ENCODE measurements at regions of chr18 and their contacts with region 1.

Region 1: DNA sequence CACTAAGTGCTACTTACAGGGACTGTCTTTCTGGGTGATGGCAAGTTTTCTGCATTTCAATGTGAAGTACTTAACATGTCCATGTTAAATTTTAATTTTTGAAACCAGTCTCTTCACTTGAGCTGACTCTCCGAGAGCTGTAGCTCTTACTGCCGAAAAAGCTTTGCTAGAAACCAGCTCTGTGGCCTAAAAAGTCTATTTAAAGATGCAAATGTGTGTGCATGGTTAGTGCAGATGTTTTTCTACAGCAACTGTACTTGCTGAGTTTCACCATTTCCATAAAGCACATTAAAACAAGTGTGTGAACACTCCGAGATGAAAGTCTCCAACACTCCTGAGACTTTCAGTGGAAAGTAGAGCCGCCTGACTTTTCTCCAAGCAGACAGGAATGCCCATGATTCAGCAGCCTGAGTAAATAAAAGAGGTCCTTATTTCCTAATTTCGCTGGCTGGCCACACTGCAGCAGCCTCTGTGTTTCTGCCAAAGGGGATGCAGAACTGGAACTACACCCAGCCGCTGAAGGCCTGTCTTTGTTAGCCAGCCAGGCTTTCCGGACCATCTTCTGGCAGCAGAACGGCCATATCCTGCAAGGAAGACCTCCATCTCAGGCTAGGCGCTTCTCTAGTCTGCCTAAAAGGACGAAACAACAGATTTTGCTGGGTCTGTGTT is 121.2 kb downstream of the ZNF521 start:
- DNase-seq: peak; percentile 17 to 91
- H3K4me3 ChIP-seq: peak overlapping the region in 1 of 2 donors; percentile 43
- H3K27ac ChIP-seq: peak overlapping the region; percentile 68 to 80
- H3K4me1 ChIP-seq: peaks cover 0 to 21% of the 10 kb centered on the region in 2 donors
- H3K27me3 ChIP-seq: no peaks in the 10 kb centered on the region
- CTCF ChIP-seq: no peak

Region 2: DNA sequence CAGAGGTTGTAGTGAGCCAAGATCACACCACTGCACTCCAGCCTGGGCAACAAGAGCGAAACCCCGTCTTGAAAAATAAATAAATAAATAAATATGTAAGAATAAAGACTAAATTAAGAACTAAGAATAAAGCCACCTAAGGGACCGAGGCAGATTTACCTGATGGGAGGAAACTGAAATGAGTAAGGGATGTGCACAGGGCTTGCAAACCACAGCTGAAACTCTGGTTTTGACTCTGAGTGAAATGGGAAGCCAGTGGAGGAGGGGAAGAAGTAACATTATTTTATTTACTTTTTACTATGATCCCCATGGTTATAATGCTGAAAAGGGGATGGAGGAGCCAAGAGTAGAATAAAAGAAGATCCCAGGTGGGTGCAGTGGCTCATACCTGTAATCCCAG is 984.6 kb before region 1 on chr18:
- intact Hi-C with region 1: no loop called
- DNase-seq: no peak
- H3K4me3 ChIP-seq: no peak overlapping the region
- H3K27ac ChIP-seq: no peak overlapping the region
- H3K4me1 ChIP-seq: no peaks in the 10 kb centered on the region
- H3K27me3 ChIP-seq: no peaks in the 10 kb centered on the region
- CTCF ChIP-seq: no peak

Region 3: GRCh38 chr18:25341831-25342230 is 111.0 kb after region 1 on chr18:
- intact Hi-C with region 1: no loop called
- DNase-seq: no peak
- H3K4me3 ChIP-seq: no peak overlapping the region
- H3K27ac ChIP-seq: no peak overlapping the region
- H3K4me1 ChIP-seq: no peaks in the 10 kb centered on the region
- H3K27me3 ChIP-seq: no peaks in the 10 kb centered on the region
- CTCF ChIP-seq: no peak

Region 4: DNA sequence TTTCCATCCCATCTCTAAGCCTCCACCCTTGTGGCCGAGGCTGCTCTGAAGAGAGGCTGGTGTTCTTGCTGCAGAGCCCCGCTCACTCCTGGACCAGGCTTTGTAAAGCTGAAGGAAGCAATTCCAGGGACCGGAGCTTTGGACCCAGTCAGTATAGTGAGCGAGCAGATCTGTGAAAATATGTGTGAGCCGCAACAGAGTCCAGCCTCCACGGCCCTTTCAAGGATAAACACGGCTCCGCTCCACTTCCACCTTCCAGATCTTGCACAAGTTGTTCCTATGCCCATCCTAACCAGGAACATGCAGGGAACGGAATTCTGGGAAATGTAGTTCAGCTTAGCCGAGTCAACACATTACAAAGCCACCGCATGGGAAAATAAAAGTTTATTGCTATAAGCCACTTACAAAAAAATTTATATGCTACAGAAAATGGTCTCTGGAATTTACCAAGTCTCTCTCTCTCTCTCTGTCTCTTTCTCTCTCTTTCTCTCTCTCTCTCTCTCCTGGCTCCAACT is 272.8 kb after region 1 on chr18:
- intact Hi-C with region 1: loop called (anchors 5 kb)
- DNase-seq: peak in 1 of 2 donors; percentile 84
- H3K4me3 ChIP-seq: peak overlapping the region; percentile 46
- H3K27ac ChIP-seq: no peak overlapping the region
- H3K4me1 ChIP-seq: peaks cover 0 to 2% of the 10 kb centered on the region in 2 donors
- H3K27me3 ChIP-seq: no peaks in the 10 kb centered on the region
- CTCF ChIP-seq: no peak

Region 5: DNA sequence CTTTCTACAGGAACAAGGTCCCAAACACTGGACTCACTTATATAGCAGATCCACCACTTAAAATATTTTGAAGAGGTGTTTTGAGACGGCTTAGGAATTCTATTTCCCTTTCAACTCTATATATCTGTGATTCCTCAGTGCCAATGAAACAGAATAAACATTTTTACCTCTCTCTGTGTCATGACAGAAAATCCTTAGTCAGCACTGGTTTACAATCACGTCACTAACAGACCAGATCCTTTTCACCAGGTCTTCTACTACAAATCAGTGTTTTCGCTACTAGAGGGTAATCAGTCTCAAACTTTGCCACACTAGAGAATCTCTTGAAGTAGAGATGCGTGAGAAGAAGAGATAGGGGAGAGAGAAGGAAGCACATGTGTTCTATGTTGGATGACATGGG is 534.0 kb after region 1 on chr18:
- intact Hi-C with region 1: no loop called
- DNase-seq: no peak
- H3K4me3 ChIP-seq: no peak overlapping the region
- H3K27ac ChIP-seq: no peak overlapping the region
- H3K4me1 ChIP-seq: no peaks in the 10 kb centered on the region
- H3K27me3 ChIP-seq: no peaks in the 10 kb centered on the region
- CTCF ChIP-seq: no peak

Measured in ascending aorta (tissue), 2 donors.